ENCODE measurements at regions of chr6 and their contacts with region 1.

Region 1: GRCh38 chr6:135497412-135498269 is at the start of gene AHI1:
- DNase-seq: peak; percentile 96
- ATAC-seq: peak; percentile 90
- H3K4me3 ChIP-seq: peak within 1 kb of the TSS; percentile 82 to 97 (median 93)
- H3K4me3 Mint-ChIP-seq: peak within 1 kb of the TSS; percentile 20
- H3K27ac ChIP-seq: peak within 1 kb of the TSS; percentile 93 to 99
- H3K27ac Mint-ChIP-seq: no peak within 1 kb of the TSS
- H3K4me1 ChIP-seq: peaks cover 10 to 12% of the 10 kb centered on the region in 2 donors
- H3K4me1 Mint-ChIP-seq: peaks cover 12% of the 10 kb centered on the region
- H3K27me3 ChIP-seq: no peaks in the 10 kb centered on the region
- H3K27me3 Mint-ChIP-seq: no peaks in the 10 kb centered on the region
- CTCF ChIP-seq: no peak
- total RNA-seq, gene AHI1: 57.9 and 61.7 TPM in 2 replicates

Region 2: DNA sequence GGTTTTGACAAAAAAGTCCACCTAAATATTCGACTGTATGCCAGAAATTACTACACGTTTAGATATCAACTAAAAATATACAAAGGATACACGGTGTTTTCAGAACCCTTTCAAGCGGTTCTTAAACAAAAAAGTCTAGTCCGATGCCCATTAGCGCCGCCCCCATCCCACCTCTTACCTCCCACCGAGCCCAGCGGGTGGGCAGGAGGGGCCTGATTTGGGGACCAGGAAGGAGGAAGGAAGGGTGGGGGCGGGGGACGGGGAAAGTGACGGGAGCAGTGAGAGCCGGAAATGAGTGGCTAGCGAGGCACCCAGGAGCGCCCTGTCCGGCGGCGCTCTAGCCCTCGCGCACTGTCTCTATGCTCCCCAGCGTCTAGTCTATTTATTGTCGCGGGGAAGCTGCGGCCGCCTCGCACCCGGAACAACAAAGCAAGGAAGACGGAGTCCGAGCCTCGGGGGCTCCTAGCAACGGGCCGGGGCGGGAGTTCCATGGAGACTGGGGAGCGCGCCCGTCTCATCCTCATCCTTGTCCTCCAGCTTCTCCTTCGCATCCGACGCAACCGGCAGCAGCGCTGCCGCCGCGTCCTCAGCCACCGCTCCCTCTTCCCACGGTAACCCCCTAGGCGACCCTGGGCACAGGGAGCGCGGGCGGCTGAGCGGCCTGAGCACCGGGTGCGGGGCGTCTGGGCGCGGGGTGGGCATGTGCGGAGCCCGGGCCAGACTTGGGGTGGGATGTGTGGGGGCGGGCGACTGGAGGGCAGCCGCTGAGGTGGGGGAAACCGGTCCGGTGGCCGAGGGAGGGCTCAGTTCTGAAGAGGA is 1544.6 kb before region 1 on chr6 and contains the start of gene TBPL1:
- CTCF ChIA-PET with region 1: no interaction called
- POLR2A ChIA-PET with region 1: no interaction called
- intact Hi-C with region 1: loop called (anchors 5 kb)
- DNase-seq: peak; percentile 97
- ATAC-seq: peak; percentile 78
- H3K4me3 ChIP-seq: peak within 1 kb of the TSS; percentile 78 to 98 (median 94)
- H3K4me3 Mint-ChIP-seq: peak within 1 kb of the TSS; percentile 98
- H3K27ac ChIP-seq: peak within 1 kb of the TSS; percentile 83 to 89
- H3K27ac Mint-ChIP-seq: peak within 1 kb of the TSS; percentile 97
- H3K4me1 ChIP-seq: peaks cover 20 to 27% of the 10 kb centered on the region in 2 donors
- H3K4me1 Mint-ChIP-seq: peaks cover 48% of the 10 kb centered on the region
- H3K27me3 ChIP-seq: no peaks in the 10 kb centered on the region
- H3K27me3 Mint-ChIP-seq: no peaks in the 10 kb centered on the region
- CTCF ChIP-seq: no peak
- total RNA-seq, gene TBPL1: 26.9 and 29.6 TPM in 2 replicates

Region 3: GRCh38 chr6:134235937-134236751 is 1261.5 kb before region 1 on chr6:
- CTCF ChIA-PET with region 1: no interaction called
- POLR2A ChIA-PET with region 1: no interaction called
- intact Hi-C with region 1: loop called (anchors 5 kb)
- DNase-seq: peak; percentile 87
- ATAC-seq: peak; percentile 84
- H3K4me3 ChIP-seq: peak overlapping the region in 1 of 5 experiments; percentile 10
- H3K4me3 Mint-ChIP-seq: peak overlapping the region; percentile 52
- H3K27ac ChIP-seq: peak overlapping the region; percentile 94 to 97
- H3K27ac Mint-ChIP-seq: peak overlapping the region; percentile 93
- H3K4me1 ChIP-seq: peaks cover 42 to 47% of the 10 kb centered on the region in 2 donors
- H3K4me1 Mint-ChIP-seq: peaks cover 46% of the 10 kb centered on the region
- H3K27me3 ChIP-seq: no peaks in the 10 kb centered on the region
- H3K27me3 Mint-ChIP-seq: no peaks in the 10 kb centered on the region
- CTCF ChIP-seq: no peak

Region 4: GRCh38 chr6:135054569-135055498 is 442.8 kb before region 1 on chr6 and contains the start of gene HBS1L:
- CTCF ChIA-PET with region 1: no interaction called
- POLR2A ChIA-PET with region 1: no interaction called
- intact Hi-C with region 1: loop called (anchors 2 kb)
- DNase-seq: peak; percentile 99
- ATAC-seq: peak; percentile 98
- H3K4me3 ChIP-seq: peak within 1 kb of the TSS; percentile 68 to 98 (median 91)
- H3K4me3 Mint-ChIP-seq: peak within 1 kb of the TSS; percentile 95
- H3K27ac ChIP-seq: peak within 1 kb of the TSS; percentile 80 to 95
- H3K27ac Mint-ChIP-seq: peak within 1 kb of the TSS; percentile 95
- H3K4me1 ChIP-seq: peaks cover 16 to 19% of the 10 kb centered on the region in 2 donors
- H3K4me1 Mint-ChIP-seq: peaks cover 34% of the 10 kb centered on the region
- H3K27me3 ChIP-seq: no peaks in the 10 kb centered on the region
- H3K27me3 Mint-ChIP-seq: no peaks in the 10 kb centered on the region
- CTCF ChIP-seq: no peak
- total RNA-seq, gene HBS1L: 58.2 and 58.9 TPM in 2 replicates

Region 5: DNA sequence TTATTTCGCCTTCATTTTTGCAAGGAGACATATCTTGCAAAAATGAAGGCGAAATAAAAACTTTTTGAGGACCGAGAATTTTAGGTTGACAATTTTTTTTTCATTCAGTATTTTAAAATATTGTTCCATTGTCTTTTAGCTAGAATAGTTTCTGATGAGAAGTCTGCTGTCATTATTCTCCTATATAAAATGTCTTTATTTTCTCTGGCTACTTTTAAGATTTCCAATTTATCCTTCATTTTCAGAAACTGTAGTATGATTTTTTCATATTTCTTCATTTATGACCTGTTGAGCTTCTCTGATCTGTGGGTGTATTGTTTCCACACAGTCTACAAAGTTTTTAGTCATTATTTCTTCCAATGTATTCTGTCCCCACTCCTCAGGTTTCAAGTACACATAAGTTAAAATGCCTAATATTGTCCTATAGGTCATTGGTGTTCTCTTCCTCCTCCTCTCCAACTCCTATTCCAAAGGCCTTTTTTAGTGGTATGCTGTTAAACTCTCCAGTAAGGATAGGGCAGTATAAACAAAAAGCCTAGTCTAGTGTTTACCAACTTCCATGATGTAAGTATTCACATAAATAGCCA is 15.8 kb before region 1 on chr6:
- CTCF ChIA-PET with region 1: no interaction called
- POLR2A ChIA-PET with region 1: no interaction called
- intact Hi-C with region 1: no loop called
- DNase-seq: no peak
- ATAC-seq: no peak
- H3K4me3 ChIP-seq: no peak overlapping the region
- H3K4me3 Mint-ChIP-seq: no peak overlapping the region
- H3K27ac ChIP-seq: no peak overlapping the region
- H3K27ac Mint-ChIP-seq: no peak overlapping the region
- H3K4me1 ChIP-seq: no peaks in the 10 kb centered on the region
- H3K4me1 Mint-ChIP-seq: no peaks in the 10 kb centered on the region
- H3K27me3 ChIP-seq: no peaks in the 10 kb centered on the region
- H3K27me3 Mint-ChIP-seq: no peaks in the 10 kb centered on the region
- CTCF ChIP-seq: no peak

Region 6: GRCh38 chr6:135651964-135652755 is 154.5 kb after region 1 on chr6:
- CTCF ChIA-PET with region 1: no interaction called
- POLR2A ChIA-PET with region 1: no interaction called
- intact Hi-C with region 1: loop called (anchors 5 kb)
- DNase-seq: peak; percentile 37
- ATAC-seq: peak; percentile 81
- H3K4me3 ChIP-seq: peak overlapping the region in 3 of 5 experiments; percentile 13 to 49 (median 15)
- H3K4me3 Mint-ChIP-seq: peak overlapping the region; percentile 52
- H3K27ac ChIP-seq: peak overlapping the region in 1 of 2 donors; percentile 65
- H3K27ac Mint-ChIP-seq: peak overlapping the region; percentile 89
- H3K4me1 ChIP-seq: peaks cover 12 to 18% of the 10 kb centered on the region in 2 donors
- H3K4me1 Mint-ChIP-seq: peaks cover 25% of the 10 kb centered on the region
- H3K27me3 ChIP-seq: no peaks in the 10 kb centered on the region
- H3K27me3 Mint-ChIP-seq: no peaks in the 10 kb centered on the region
- CTCF ChIP-seq: no peak

Region 7: GRCh38 chr6:135880066-135880972 is 382.7 kb after region 1 on chr6:
- CTCF ChIA-PET with region 1: no interaction called
- POLR2A ChIA-PET with region 1: interaction called, 5 read pairs
- intact Hi-C with region 1: loop called (anchors 1 kb)
- DNase-seq: peak; percentile 75
- ATAC-seq: peak; percentile 90
- H3K4me3 ChIP-seq: peak overlapping the region; percentile 14 to 64 (median 36)
- H3K4me3 Mint-ChIP-seq: peak overlapping the region; percentile 84
- H3K27ac ChIP-seq: peak overlapping the region; percentile 91 to 99
- H3K27ac Mint-ChIP-seq: peak overlapping the region; percentile 98
- H3K4me1 ChIP-seq: peaks cover 35% of the 10 kb centered on the region in 2 donors
- H3K4me1 Mint-ChIP-seq: peaks cover 49% of the 10 kb centered on the region
- H3K27me3 ChIP-seq: no peaks in the 10 kb centered on the region
- H3K27me3 Mint-ChIP-seq: no peaks in the 10 kb centered on the region
- CTCF ChIP-seq: no peak

Region 8: GRCh38 chr6:136249811-136250685 is 752.4 kb after region 1 on chr6 and contains the start of gene MTFR2:
- CTCF ChIA-PET with region 1: no interaction called
- POLR2A ChIA-PET with region 1: interaction called, 7 read pairs
- intact Hi-C with region 1: loop called (anchors 1 kb)
- DNase-seq: peak; percentile 97
- ATAC-seq: peak; percentile 97
- H3K4me3 ChIP-seq: peak within 1 kb of the TSS; percentile 49 to 91 (median 83)
- H3K4me3 Mint-ChIP-seq: peak within 1 kb of the TSS; percentile 93
- H3K27ac ChIP-seq: peak within 1 kb of the TSS in 1 of 2 donors; percentile 20
- H3K27ac Mint-ChIP-seq: peak within 1 kb of the TSS; percentile 81
- H3K4me1 ChIP-seq: peaks cover 15 to 16% of the 10 kb centered on the region in 2 donors
- H3K4me1 Mint-ChIP-seq: peaks cover 33% of the 10 kb centered on the region
- H3K27me3 ChIP-seq: no peaks in the 10 kb centered on the region
- H3K27me3 Mint-ChIP-seq: no peaks in the 10 kb centered on the region
- CTCF ChIP-seq: no peak
- total RNA-seq, gene MTFR2: 3.9 and 4.0 TPM in 2 replicates